ENCODE measurements at regions of chr17 and their contacts with region 1.

Region 1: GRCh38 chr17:74309902-74310301 is 16.1 kb upstream of the KIF19 start:
- DNase-seq: no peak
- ATAC-seq: no peak
- H3K4me3 ChIP-seq: no peak overlapping the region
- H3K27ac ChIP-seq: no peak overlapping the region
- H3K4me1 ChIP-seq: no peaks in the 10 kb centered on the region
- H3K27me3 ChIP-seq: no peaks in the 10 kb centered on the region
- CTCF ChIP-seq: no peak

Region 2: DNA sequence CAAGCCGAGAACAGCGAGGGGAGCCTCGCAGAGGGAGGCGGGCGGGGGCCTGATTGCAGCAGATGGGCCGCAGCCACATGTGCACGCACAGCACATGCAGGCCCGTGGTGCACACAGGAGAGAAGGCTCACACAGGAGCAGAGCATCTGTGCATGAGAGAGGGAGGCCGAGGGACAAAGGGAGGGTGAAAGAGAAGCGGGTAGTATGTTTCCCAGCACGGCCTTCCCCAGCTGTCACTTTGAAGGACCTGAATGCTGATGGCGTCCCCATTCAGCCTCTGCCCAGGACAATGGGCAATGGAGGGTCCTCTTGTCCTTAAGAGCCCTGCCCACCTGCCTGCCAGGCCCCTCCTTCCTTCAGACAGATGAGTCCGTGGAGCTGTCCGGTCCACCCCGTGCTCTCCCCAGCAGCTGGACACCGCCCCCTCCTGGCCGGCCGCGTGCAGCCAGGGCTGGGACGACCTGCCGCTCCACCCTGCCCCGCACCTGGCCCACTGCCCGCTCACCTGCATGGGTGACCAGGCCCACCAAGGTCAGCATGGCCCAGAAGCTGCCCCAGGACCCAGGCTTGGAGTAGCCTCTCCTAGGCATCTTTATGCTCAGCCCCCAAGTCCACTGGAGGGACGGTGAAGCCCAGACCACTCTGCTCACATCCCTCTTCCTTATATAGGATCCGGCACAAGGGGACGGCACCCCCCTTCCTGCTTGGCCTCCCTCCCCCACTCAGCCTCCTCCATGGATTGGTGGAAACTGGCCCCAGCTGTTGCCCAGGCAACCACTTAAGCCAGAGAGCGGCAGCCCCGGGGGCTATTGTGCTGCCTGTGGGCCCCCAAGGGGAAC is 51.5 kb after region 1 on chr17 and contains the start of gene BTBD17:
- intact Hi-C with region 1: loop called in 1 of 3 experiments (anchors 5 kb)
- DNase-seq: peak; percentile 40 to 87 (median 73)
- ATAC-seq: peak; percentile 72 to 90 (median 86)
- H3K4me3 ChIP-seq: no peak within 1 kb of the TSS
- H3K27ac ChIP-seq: no peak within 1 kb of the TSS
- H3K4me1 ChIP-seq: peaks cover 0 to 3% (median 0%) of the 10 kb centered on the region in 3 donors
- H3K27me3 ChIP-seq: peaks cover 0 to 23% (median 2%) of the 10 kb centered on the region in 4 donors
- CTCF ChIP-seq: peak; percentile 56 to 73 (median 62)
- total RNA-seq, gene BTBD17: 0.08 to 0.22 (median 0.15) TPM